HCT116 (cell line): ENCODE measurements at regions of chr21 and their contacts with region 1.

Region 1: DNA sequence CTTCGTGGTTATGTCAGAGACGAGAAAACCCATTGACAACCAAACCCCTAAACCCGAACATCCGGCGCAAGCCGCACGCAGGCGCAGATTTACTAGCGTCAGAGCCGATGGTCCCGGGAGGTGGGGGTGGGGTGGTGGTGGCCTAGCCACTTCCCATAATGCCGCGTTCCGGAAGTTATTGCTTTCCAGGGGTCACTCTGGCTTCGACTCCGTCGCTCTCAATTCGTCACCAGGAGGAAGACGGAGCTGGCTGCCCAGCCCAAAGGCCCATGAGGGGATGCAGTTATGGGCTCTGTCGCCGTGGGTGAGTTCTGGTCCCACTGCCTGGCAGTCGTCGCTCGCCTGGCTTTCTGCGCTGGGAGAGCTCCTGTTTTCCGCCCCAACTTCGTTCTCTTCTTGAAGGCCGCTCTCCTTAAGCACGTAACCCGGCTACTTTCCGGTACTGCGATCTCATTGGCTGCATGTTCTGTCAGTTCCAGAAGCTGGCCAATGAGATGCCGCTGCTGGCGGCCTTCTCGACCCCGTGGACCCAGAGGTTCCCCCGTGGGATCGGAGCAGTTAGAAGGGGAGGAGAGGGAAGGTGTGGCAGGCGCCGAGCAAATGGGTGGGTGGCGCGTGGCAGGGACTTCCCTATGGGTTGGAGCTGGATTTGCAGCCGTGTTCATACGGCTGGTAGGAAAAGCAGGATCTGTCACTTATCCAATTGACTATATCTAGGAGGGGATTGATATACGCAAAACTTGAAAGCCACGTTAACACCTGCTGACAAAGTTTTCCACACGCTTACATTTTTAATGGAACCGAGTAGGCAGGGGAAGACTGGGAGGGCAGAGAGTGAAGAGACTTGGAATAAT is at the start of gene USP16:
- DNase-seq: peak; percentile 98
- ATAC-seq: peak; percentile 97
- H3K4me3 ChIP-seq: peak within 1 kb of the TSS; percentile 66 to 67
- H3K27ac ChIP-seq: peak within 1 kb of the TSS; percentile 78
- H3K4me1 ChIP-seq: peaks cover 5 to 36% of the 10 kb centered on the region in 2 experiments; a peak in 3 of 4 replicates
- H3K27me3 ChIP-seq: no peaks in the 10 kb centered on the region
- CTCF ChIP-seq: 0 out of 6 replicates have a peak, but pooled peaks of 1 of the 3 experiments have one; percentile 10
- POLR2A ChIP-seq: peak; percentile 62
- RAD21 ChIP-seq: no peak
- total RNA-seq, gene USP16: 35.9 TPM

Region 2: GRCh38 chr21:28992526-28993292 is 32.0 kb before region 1 on chr21 and contains the start of gene LTN1:
- CTCF ChIA-PET with region 1: no interaction called
- POLR2A ChIA-PET with region 1: interaction called, 3 read pairs
- RAD21 ChIA-PET with region 1: no interaction called
- intact Hi-C with region 1: loop called (anchors 2 kb)
- DNase-seq: peak; percentile 98
- ATAC-seq: peak; percentile 93
- H3K4me3 ChIP-seq: peak within 1 kb of the TSS; percentile 71 to 98
- H3K27ac ChIP-seq: peak within 1 kb of the TSS; percentile 76
- H3K4me1 ChIP-seq: peaks cover 15 to 33% of the 10 kb centered on the region in 2 experiments
- H3K27me3 ChIP-seq: no peaks in the 10 kb centered on the region
- CTCF ChIP-seq: no peak
- POLR2A ChIP-seq: peak; percentile 80
- RAD21 ChIP-seq: no peak
- total RNA-seq, gene LTN1: 8.7 TPM

Region 3: DNA sequence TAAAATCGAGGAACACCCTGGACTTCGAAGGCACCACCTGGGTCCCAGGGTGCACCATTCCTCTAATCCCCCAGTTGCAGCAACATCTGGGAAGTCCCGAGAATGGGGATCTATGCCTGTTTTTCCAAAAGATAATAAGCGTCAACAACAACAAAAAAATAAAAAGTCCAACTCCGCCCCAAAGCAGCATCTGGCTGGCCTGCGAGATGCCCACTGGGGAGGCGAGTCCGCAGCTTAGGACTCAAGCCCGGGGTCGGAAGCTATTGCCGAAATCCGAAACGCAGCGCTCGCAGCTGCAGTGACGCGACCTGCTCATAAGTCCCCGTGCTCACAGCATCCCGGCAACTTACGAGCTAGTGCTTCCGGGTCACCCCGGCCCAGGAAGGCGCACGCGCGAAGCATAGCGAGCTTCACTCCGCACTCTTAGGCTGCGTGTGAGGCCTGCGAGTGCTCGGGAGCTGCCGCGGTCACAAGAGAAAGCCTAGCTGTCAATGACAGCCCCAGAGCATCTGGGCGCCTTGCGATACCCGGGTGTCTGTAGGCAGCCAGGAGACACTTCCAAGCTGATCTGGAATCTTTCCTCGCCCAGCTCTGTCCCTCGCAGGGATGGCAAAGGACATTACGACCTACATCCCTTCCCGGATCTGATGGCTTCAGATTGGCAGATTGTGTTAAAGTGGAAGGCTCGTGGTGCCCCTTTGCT is 22.1 kb before region 1 on chr21:
- CTCF ChIA-PET with region 1: no interaction called
- POLR2A ChIA-PET with region 1: interaction called, 39 read pairs
- RAD21 ChIA-PET with region 1: interaction called in 1 of 2 experiments, 4 read pairs
- intact Hi-C with region 1: loop called (anchors 1 kb)
- DNase-seq: peak; percentile 92
- ATAC-seq: peak; percentile 98
- H3K4me3 ChIP-seq: peak overlapping the region; percentile 57 to 86
- H3K27ac ChIP-seq: peak overlapping the region; percentile 95
- H3K4me1 ChIP-seq: peaks cover 0 to 24% of the 10 kb centered on the region in 2 experiments; a peak in 2 of 4 replicates
- H3K27me3 ChIP-seq: no peaks in the 10 kb centered on the region
- CTCF ChIP-seq: no peak
- POLR2A ChIP-seq: peak; percentile 98
- RAD21 ChIP-seq: no peak

Region 4: DNA sequence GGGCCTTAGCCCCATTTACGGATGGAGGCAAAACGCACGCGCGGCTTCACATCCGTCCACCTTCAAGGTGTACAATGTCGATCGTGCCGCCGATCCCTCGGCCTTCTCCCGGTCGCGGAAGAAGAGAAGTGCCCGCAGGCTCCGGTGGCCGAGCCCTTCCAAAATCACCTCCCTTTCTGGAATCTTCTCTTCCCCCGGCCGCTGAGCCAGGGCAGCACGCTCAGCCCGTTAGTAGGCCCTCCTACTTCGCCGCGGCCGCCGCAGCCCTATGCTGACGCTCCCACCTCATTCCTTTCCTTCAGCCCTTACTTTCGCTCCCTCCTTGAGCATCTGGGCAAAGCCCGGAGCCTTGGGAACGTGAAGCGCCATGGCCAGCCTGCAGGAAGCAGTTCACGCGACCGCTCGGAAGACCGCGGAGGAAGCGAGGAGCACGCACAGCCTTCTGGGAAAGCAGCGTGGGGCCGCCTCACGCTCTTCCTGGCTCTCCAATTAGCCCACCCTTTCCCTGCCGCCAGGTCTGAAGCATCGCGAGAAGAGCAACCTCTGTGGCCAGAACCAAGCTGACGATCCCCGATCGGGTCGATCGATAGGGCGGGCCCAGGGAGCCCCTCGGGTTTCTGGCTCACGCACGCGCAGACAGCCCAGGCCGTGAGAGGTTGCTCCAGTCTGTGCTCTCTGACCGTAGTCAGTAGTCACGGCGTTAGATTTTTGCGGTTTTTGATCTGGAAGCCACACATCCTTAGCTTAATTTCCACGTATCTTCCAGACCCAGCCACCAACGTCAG is 48.7 kb after region 1 on chr21 and contains the start of gene CCT8:
- CTCF ChIA-PET with region 1: no interaction called
- POLR2A ChIA-PET with region 1: interaction called, 6 read pairs
- RAD21 ChIA-PET with region 1: no interaction called
- intact Hi-C with region 1: loop called (anchors 1 kb)
- DNase-seq: peak; percentile 99
- ATAC-seq: peak; percentile 93
- H3K4me3 ChIP-seq: peak within 1 kb of the TSS; percentile 85 to 100
- H3K27ac ChIP-seq: peak within 1 kb of the TSS; percentile 91
- H3K4me1 ChIP-seq: peaks cover 20 to 42% of the 10 kb centered on the region in 2 experiments
- H3K27me3 ChIP-seq: no peaks in the 10 kb centered on the region
- CTCF ChIP-seq: no peak
- POLR2A ChIP-seq: peak; percentile 88
- RAD21 ChIP-seq: no peak
- total RNA-seq, gene CCT8: 355 TPM

Region 5: DNA sequence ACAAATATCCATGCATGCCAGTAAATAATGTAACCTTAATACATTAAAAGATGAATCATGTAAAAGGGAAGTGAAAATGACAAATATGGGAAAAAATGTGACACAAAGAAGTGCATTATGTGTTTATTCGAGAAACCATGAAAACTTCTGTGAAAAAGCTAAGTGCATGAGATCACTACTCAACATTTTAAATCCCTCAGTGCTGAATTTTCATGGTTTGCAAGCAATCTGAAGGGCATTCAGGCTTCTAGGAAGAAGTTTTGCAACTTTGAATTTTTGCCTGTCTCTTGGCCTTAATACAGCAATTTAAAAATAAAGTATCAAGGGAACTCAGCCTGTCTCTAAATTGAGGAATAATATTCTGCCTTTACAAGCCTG is 184.0 kb after region 1 on chr21:
- CTCF ChIA-PET with region 1: no interaction called
- POLR2A ChIA-PET with region 1: no interaction called
- RAD21 ChIA-PET with region 1: no interaction called
- intact Hi-C with region 1: no loop called
- DNase-seq: no peak
- ATAC-seq: no peak
- H3K4me3 ChIP-seq: no peak overlapping the region
- H3K27ac ChIP-seq: no peak overlapping the region
- H3K4me1 ChIP-seq: peaks cover 0 to 7% of the 10 kb centered on the region in 2 experiments; a peak in 1 of 4 replicates
- H3K27me3 ChIP-seq: no peaks in the 10 kb centered on the region
- CTCF ChIP-seq: no peak
- POLR2A ChIP-seq: no peak
- RAD21 ChIP-seq: no peak